GM10248 (cell line): ENCODE measurements at regions of chr9 and their contacts with region 1.

Region 1: GRCh38 chr9:114681594-114682332 is at the start of gene TEX48:
- DNase-seq: peak; percentile 73
- CTCF ChIP-seq: peak; percentile 87

Region 2: GRCh38 chr9:114460513-114461199 is 221.1 kb before region 1 on chr9:
- CTCF ChIA-PET with region 1: no interaction called
- POLR2A ChIA-PET with region 1: no interaction called
- DNase-seq: peak; percentile 6
- CTCF ChIP-seq: no peak

Region 3: GRCh38 chr9:114671605-114672004 is 10.2 kb before region 1 on chr9:
- CTCF ChIA-PET with region 1: interaction called, 44 read pairs
- POLR2A ChIA-PET with region 1: no interaction called
- DNase-seq: no peak
- CTCF ChIP-seq: no peak

Region 4: GRCh38 chr9:114706711-114707110 is 24.9 kb after region 1 on chr9:
- CTCF ChIA-PET with region 1: interaction called, 32 read pairs
- POLR2A ChIA-PET with region 1: no interaction called
- DNase-seq: no peak
- CTCF ChIP-seq: no peak

Region 5: DNA sequence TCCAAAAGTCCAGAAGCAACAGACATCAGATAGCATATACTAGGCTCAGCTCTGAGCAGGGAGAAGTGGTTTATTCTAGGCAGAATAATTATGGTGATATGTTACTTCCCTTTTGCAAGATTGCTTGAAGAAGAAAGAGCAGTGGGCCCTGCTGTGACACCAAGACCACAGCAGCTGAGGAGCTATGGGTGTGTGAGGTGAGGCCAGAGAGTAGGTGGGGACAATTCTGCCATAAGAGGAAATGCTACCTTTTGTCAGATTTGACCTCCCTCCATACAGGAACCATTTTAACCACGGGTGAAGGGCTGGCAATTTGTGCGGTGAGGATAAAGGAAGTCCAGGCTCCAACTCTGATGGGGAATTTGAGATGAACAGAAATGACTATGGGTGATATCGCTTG is 72.8 kb after region 1 on chr9:
- CTCF ChIA-PET with region 1: interaction called, 11 read pairs
- POLR2A ChIA-PET with region 1: no interaction called
- DNase-seq: peak; percentile 43
- CTCF ChIP-seq: no peak

Region 6: DNA sequence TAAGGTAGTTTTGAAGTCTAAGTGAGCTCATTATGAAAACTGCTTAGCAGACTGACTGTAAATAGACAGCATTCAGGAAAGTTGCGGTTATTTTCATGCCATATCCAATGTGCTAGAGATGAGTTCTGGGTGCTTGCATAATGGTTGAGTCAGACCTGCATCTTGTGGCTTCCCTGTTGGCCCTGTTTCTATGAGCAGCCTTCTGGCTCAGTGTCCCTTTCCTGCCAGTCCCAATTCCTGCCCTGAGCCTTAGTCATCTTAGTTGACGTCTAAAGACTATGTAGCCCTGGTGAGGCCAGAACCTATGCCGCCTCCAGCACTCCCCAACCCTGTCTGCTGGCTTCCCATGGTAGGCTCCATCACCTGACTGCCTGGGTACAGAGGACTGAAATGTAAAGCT is 324.9 kb after region 1 on chr9:
- CTCF ChIA-PET with region 1: interaction called, 25 read pairs
- POLR2A ChIA-PET with region 1: no interaction called
- DNase-seq: no peak
- CTCF ChIP-seq: no peak